AG04450 (cell line): ENCODE measurements at regions of chr11 and their contacts with region 1.

Region 1: DNA sequence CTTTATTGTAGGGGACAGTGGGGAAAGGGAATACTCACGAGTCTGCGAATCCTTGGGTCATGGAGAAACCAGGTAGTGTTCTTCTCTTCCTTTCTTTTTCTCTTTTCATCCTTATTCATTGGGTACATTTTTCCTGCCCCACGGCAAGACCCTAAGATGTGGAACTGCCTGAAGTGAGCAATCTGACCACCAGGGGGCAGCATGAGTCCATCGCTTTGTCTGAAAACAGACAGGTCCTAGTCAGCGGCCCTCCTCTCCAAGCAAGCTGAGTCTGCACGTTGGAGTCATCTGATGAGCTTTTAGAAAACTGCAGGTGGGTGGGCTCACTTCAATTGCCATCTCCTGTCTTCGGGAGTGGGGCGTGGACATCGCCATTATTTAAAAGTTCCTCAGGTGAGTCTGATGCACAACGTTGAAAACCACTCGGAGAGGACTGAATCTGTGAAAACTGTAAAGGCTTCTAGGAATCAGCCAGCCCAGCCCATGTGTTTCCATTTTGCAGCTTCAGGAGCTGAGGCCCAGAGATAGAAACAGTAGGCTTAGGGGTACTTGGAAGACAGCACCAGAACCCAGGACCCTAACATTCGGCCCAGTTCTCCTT is 34.0 kb upstream of the FBXO3 start:
- DNase-seq: peak; percentile 63
- H3K4me3 ChIP-seq: no peak overlapping the region
- H3K27ac ChIP-seq: no peak overlapping the region
- H3K27me3 ChIP-seq: peaks cover 3% of the 10 kb centered on the region
- CTCF ChIP-seq: peak; percentile 94

Region 2: DNA sequence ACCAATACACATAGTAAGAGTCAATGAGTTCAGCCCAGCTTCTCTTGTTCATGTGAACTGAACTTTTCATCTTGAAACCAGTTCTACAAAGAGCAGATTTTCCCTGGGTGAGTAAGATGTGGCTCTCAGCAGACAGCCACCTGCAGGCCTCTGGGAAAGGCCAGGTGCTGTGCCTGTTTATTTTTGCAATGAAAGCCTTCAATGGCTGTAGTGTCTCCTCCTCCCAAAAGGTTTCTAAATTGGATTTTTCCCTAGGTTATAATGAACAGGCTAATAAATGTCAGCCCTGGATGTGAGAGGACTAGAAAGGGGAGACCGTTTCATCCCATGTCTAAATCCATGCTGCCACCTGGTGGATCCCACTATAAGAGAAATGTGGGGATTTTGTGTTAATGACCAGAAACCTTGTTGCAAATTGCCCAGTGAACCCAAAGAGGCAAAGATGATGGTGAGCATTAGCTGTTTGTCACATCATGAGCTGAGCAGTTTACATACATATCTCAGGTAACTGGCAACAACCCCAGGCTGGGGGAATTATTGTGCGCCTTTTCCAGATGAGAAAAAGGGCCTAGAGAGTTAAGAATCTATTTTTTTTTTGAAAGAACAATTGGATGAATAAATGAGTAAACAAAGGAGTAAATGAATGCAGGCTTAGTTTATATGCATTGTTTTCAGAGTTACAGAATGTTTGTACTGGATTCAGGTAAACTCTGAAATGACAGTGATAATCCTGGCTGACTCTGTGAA is 120.4 kb before region 1 on chr11:
- CTCF ChIA-PET with region 1: no interaction called
- POLR2A ChIA-PET with region 1: no interaction called
- DNase-seq: no peak
- H3K4me3 ChIP-seq: no peak overlapping the region
- H3K27ac ChIP-seq: no peak overlapping the region
- H3K27me3 ChIP-seq: no peaks in the 10 kb centered on the region
- CTCF ChIP-seq: peak; percentile 82

Region 3: DNA sequence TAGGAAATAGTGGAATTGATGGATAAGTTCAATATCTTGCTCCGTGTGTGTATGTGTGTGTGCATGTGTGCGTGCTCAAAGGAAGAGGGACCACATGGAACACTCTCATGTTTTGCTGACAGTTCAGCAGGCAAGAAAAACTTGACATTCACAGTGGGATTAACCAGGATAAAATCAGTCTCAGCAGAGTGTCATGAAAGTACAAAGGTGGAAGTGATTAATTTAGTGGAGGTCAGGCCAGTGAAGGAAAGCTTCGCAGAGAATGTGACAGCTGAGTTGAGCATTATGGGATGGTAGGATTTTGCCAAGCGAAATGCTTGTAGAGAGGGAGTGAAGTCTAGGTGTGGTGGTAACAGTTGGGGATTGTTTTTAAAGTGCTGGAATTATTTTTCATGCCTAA is 18.3 kb before region 1 on chr11:
- CTCF ChIA-PET with region 1: interaction called, 27 read pairs
- POLR2A ChIA-PET with region 1: no interaction called
- DNase-seq: no peak
- H3K4me3 ChIP-seq: no peak overlapping the region
- H3K27ac ChIP-seq: no peak overlapping the region
- H3K27me3 ChIP-seq: peaks cover 16% of the 10 kb centered on the region
- CTCF ChIP-seq: no peak

Region 4: GRCh38 chr11:33829433-33830141 is 21.3 kb after region 1 on chr11:
- CTCF ChIA-PET with region 1: interaction called, 206 read pairs
- POLR2A ChIA-PET with region 1: no interaction called
- DNase-seq: peak; percentile 39
- H3K4me3 ChIP-seq: peak overlapping the region; percentile 55
- H3K27ac ChIP-seq: no peak overlapping the region
- H3K27me3 ChIP-seq: peaks cover 32% of the 10 kb centered on the region
- CTCF ChIP-seq: peak; percentile 92

Region 5: GRCh38 chr11:33970984-33971466 is 162.7 kb after region 1 on chr11:
- CTCF ChIA-PET with region 1: interaction called, 21 read pairs
- POLR2A ChIA-PET with region 1: no interaction called
- DNase-seq: peak; percentile 4
- H3K4me3 ChIP-seq: no peak overlapping the region
- H3K27ac ChIP-seq: no peak overlapping the region
- H3K27me3 ChIP-seq: peaks cover 15% of the 10 kb centered on the region
- CTCF ChIP-seq: peak; percentile 64